Endothelial cell of umbilical vein (primary cell): ENCODE measurements at regions of chr7 and their contacts with region 1.

Region 1: DNA sequence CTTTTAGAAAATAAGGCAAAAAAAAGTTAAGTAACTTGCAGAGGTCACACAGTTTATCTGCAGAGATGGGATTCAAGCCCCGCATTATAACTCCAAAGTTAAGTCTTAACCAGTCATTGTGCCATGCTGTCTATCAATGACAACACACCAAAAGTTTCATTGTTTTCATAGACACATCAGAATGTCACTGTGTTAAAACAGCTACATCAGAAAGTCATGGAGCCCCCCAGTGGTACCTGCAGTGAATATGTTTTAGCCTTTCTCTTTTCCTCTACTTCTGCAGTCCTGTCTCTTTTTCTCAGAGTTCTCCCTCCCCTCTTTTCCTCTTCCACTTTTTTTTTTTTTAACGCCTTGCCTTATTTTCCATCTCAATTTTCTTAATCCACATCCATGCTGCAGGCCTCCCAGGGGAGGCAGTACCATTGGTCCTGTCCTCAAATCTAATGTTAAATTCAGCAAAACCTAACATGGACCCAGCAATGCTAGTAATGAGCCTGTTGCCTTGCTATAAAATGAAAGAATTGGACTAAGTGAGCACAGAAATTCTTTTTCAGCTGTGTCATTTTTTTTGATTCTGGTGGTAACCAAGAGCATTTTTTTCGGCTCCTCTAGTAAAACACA is 3.8 kb upstream of the NRCAM start:
- DNase-seq: peak; percentile 59
- H3K4me3 ChIP-seq: no peak overlapping the region
- H3K27ac ChIP-seq: no peak overlapping the region
- H3K4me1 ChIP-seq: peaks cover 6% of the 10 kb centered on the region
- H3K27me3 ChIP-seq: no peaks in the 10 kb centered on the region
- CTCF ChIP-seq: peak; percentile 60 to 65
- POLR2A ChIP-seq: no peak

Region 2: DNA sequence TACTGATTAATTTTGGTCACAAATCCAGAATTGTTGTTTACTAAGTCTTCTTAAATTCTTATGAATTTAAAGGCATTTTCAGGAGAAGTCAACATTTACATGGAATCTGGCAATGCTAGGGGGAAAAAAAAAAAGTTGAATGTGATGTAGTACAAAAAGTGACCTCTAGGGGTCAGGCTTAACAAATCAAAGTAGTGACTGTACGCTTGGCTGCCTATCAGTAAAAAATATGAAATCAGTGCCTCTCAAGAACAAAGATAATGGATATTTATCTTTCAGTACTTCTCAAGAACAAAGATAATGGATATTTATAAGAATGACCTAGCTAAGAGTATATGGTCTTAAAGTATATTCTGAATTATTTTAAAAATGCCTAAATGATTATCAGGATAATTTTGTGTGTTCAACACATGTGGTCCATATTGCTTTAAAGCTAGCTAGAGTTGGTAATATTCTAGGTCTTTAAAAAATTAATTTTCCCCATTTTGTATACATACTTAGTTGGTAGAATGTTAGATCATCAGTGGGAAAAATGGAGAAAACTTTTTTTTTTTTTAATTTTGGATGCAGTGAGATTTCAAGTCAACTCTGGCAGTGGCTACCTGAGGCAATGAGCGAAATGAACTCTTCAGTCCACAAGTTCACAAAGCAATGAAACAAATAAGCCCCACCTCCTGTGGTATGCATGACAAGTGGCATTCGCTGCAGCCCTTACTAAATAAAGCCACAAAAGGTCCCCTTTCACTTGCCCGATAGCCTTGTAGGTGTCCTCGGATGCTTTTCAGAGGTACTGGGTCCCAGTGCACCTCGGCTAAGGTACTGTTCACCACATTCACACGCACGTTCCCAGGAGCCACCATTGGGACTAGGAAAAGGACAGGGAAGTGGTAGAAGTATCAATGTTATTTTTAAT is 278.7 kb before region 1 on chr7:
- CTCF ChIA-PET with region 1: interaction called, 22 read pairs
- POLR2A ChIA-PET with region 1: no interaction called
- dilution Hi-C with region 1: no loop called
- intact Hi-C with region 1: loop called (anchors 1 kb)
- DNase-seq: peak; percentile 86
- H3K4me3 ChIP-seq: no peak overlapping the region
- H3K27ac ChIP-seq: no peak overlapping the region
- H3K4me1 ChIP-seq: no peaks in the 10 kb centered on the region
- H3K27me3 ChIP-seq: no peaks in the 10 kb centered on the region
- CTCF ChIP-seq: peak; percentile 32 to 54
- POLR2A ChIP-seq: no peak

Region 3: DNA sequence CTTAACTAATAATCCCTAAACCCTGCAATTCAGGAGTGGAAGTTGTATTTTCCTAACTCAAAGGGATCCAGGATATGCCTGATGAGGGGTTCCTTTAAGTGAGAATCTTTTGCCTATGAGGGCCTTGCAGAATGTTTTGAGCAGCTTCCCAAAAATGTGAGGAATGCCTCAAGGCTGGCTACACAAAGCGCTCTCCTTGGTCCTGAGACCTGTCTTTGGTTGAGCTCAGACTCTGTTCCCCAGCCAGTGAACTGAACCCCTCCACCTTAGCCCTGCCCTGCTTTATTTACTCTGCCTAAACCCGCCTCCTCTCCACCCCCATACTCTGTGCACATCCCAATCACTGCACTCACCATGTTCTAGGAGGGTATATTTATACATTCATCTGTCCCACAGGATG is 112.4 kb before region 1 on chr7:
- CTCF ChIA-PET with region 1: no interaction called
- POLR2A ChIA-PET with region 1: no interaction called
- dilution Hi-C with region 1: no loop called
- intact Hi-C with region 1: no loop called
- DNase-seq: peak; percentile 24
- H3K4me3 ChIP-seq: no peak overlapping the region
- H3K27ac ChIP-seq: no peak overlapping the region
- H3K4me1 ChIP-seq: peaks cover 7% of the 10 kb centered on the region
- H3K27me3 ChIP-seq: no peaks in the 10 kb centered on the region
- CTCF ChIP-seq: no peak
- POLR2A ChIP-seq: no peak

Region 4: GRCh38 chr7:108637049-108637621 is 177.1 kb after region 1 on chr7:
- CTCF ChIA-PET with region 1: no interaction called
- POLR2A ChIA-PET with region 1: no interaction called
- dilution Hi-C with region 1: no loop called
- intact Hi-C with region 1: no loop called
- DNase-seq: no peak
- H3K4me3 ChIP-seq: no peak overlapping the region
- H3K27ac ChIP-seq: no peak overlapping the region
- H3K4me1 ChIP-seq: no peaks in the 10 kb centered on the region
- H3K27me3 ChIP-seq: peaks cover 0 to 4% of the 10 kb centered on the region in 2 experiments
- CTCF ChIP-seq: no peak
- POLR2A ChIP-seq: no peak